Caco-2 (cell line): ENCODE measurements at regions of chr5 and their contacts with region 1.

Region 1: GRCh38 chr5:10856683-10857337 is 95.8 kb upstream of the DAP start:
- DNase-seq: peak in 1 of 2 experiments; percentile 60
- H3K4me3 ChIP-seq: no peak overlapping the region
- H3K4me3 Mint-ChIP-seq: no peak overlapping the region
- H3K27ac Mint-ChIP-seq: peak overlapping the region; percentile 5
- H3K4me1 ChIP-seq: peaks cover 16% of the 10 kb centered on the region
- H3K4me1 Mint-ChIP-seq: peaks cover 11% of the 10 kb centered on the region
- H3K27me3 ChIP-seq: no peaks in the 10 kb centered on the region
- H3K27me3 Mint-ChIP-seq: no peaks in the 10 kb centered on the region
- CTCF ChIP-seq: peak; percentile 59 to 64

Region 2: GRCh38 chr5:10701567-10702039 is 155.2 kb before region 1 on chr5:
- CTCF ChIA-PET with region 1: no interaction called
- POLR2A ChIA-PET with region 1: no interaction called
- intact Hi-C with region 1: loop called (anchors 10 kb)
- DNase-seq: peak in 1 of 2 experiments; percentile 59
- H3K4me3 ChIP-seq: no peak overlapping the region
- H3K4me3 Mint-ChIP-seq: no peak overlapping the region
- H3K27ac Mint-ChIP-seq: no peak overlapping the region
- H3K4me1 ChIP-seq: peaks cover 24% of the 10 kb centered on the region
- H3K4me1 Mint-ChIP-seq: peaks cover 21% of the 10 kb centered on the region
- H3K27me3 ChIP-seq: no peaks in the 10 kb centered on the region
- H3K27me3 Mint-ChIP-seq: no peaks in the 10 kb centered on the region
- CTCF ChIP-seq: peak; percentile 69 to 86

Region 3: DNA sequence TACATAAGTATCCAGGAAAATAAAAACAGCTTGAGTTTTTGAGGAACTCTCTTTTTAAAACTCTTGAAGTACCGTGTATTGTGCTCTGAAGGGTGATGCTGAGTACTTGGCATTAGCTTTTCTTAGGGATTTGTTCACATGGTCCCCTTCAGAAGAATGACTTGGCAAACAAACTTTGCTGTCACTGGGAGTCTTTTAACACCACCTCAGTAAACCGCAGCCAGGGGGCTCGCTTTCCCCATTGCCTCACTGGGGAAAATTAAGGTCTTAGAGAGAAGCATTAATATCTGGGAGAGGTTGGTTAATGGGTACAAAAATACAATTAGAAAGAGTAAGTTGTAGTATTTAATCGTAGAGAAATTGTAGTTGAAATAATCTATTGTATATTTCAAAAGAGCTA is 10.1 kb after region 1 on chr5:
- CTCF ChIA-PET with region 1: no interaction called
- POLR2A ChIA-PET with region 1: no interaction called
- intact Hi-C with region 1: no loop called
- DNase-seq: peak in 1 of 2 experiments; percentile 16
- H3K4me3 ChIP-seq: no peak overlapping the region
- H3K4me3 Mint-ChIP-seq: no peak overlapping the region
- H3K27ac Mint-ChIP-seq: no peak overlapping the region
- H3K4me1 ChIP-seq: no peaks in the 10 kb centered on the region
- H3K4me1 Mint-ChIP-seq: no peaks in the 10 kb centered on the region
- H3K27me3 ChIP-seq: no peaks in the 10 kb centered on the region
- H3K27me3 Mint-ChIP-seq: peaks cover 9% of the 10 kb centered on the region
- CTCF ChIP-seq: peak in 1 of 2 experiments; percentile 42